Heart right ventricle (tissue), 16 donors: ENCODE measurements at regions of chr7 and their contacts with region 1.

Region 1: GRCh38 chr7:106659963-106660861 is 746 bp downstream of the CCDC71L start:
- DNase-seq: peak; percentile 61 to 78
- ATAC-seq: peak; percentile 59 to 80 (median 68)
- H3K4me3 ChIP-seq: peak overlapping the region; percentile 69 to 95 (median 82)
- H3K27ac ChIP-seq: peak overlapping the region; percentile 86 to 98 (median 94)
- H3K4me1 ChIP-seq: peaks cover 0 to 35% (median 27%) of the 10 kb centered on the region in 9 donors
- H3K27me3 ChIP-seq: no peaks in the 10 kb centered on the region
- CTCF ChIP-seq: peak; percentile 61 to 84 (median 72)

Region 2: DNA sequence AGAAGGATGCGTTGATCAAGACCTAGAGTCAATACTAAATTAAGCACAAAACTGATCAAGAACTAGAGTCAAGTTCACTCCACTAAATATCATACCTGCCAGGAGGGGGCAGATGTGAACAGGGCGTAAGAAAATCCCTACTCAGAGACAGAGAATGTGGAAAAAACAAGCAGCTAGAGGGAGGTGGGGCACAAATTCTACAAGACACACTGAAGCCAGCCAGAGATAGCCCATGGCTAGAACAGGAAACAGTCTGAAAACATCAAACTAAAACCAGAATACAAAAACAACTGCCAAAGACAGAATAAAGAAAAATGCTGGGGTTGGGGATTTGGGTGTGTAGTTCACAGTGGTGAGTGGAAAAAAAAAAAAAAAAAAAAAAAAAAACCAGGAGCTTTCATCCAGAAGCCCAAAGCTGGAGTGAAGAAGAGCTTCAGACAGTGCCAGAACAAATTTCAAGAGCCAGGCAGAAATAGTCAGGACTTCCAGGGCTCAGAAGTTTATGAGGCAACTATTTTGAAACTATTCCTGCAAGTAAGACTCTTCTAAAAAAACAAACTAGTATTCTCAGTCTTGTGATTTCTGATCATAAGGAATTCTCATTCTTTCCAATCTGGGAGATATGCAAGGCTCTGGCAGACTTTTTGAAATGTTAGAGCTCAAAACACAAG is 117.5 kb before region 1 on chr7:
- intact Hi-C with region 1: loop called in 5 of 10 experiments (anchors 5 to 10 kb)
- DNase-seq: peak in 1 of 2 donors; percentile 61
- ATAC-seq: peak in 7 of 8 donors; percentile 51 to 89 (median 86)
- H3K4me3 ChIP-seq: no peak overlapping the region
- H3K27ac ChIP-seq: peak overlapping the region in 1 of 10 donors; percentile 19
- H3K4me1 ChIP-seq: peaks cover 0 to 15% (median 6%) of the 10 kb centered on the region in 9 donors
- H3K27me3 ChIP-seq: no peaks in the 10 kb centered on the region
- CTCF ChIP-seq: peak; percentile 32 to 73 (median 61)

Region 3: GRCh38 chr7:106693677-106694353 is 33.6 kb after region 1 on chr7:
- intact Hi-C with region 1: loop called in 1 of 10 experiments (anchors 1 kb)
- DNase-seq: no peak
- ATAC-seq: no peak
- H3K4me3 ChIP-seq: no peak overlapping the region
- H3K27ac ChIP-seq: no peak overlapping the region
- H3K4me1 ChIP-seq: peaks cover 0 to 5% (median 0%) of the 10 kb centered on the region in 9 donors
- H3K27me3 ChIP-seq: no peaks in the 10 kb centered on the region
- CTCF ChIP-seq: no peak

Region 4: DNA sequence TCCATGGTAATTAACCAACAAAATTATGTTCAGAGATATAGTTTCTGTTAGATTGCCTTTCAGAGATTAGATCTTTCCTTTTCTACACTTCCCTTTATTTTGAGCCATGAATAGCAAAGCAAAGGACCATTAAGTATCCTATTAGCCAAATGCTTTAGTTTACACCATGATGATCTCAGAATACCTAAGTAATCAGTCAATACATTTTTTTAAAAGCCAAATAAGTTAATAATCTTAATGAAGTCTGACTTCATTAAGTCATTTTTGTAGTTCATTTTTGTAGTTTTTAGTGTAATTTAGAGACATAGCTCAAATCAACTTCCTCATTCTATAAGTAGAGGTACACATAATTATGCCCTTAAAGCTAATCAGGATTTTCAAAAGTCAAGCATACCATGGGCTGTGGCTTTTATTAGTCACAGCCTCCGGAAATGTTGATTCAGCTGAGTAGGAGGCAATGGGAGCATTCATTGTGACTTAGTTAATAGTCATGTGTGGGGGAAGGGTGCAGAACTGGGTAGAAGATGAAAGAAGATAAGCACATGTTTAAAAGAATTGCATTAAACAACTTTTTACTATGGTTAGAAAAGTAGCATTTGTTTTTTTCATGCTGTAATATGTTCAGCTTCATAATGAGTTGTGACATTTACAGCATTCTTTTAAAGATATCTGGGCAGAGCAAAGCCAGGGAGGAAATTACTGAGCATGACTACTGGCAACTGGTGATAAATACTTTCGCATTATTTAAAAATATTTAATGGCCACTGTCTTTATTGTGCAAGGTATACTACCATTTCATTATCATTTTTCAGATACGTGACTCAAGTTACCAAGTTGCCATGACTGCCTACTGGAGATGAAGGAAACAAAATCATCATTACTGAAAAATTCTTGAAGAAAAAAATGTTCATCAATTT is 58.0 kb after region 1 on chr7:
- intact Hi-C with region 1: loop called in 2 of 10 experiments (anchors 5 kb)
- DNase-seq: peak in 1 of 2 donors; percentile 36
- ATAC-seq: peak; percentile 68 to 91 (median 80)
- H3K4me3 ChIP-seq: no peak overlapping the region
- H3K27ac ChIP-seq: peak overlapping the region in 7 of 10 donors; percentile 1 to 83 (median 26)
- H3K4me1 ChIP-seq: peaks cover 0 to 52% (median 6%) of the 10 kb centered on the region in 9 donors
- H3K27me3 ChIP-seq: peaks cover 0 to 5% (median 0%) of the 10 kb centered on the region in 7 donors
- CTCF ChIP-seq: no peak

Region 5: DNA sequence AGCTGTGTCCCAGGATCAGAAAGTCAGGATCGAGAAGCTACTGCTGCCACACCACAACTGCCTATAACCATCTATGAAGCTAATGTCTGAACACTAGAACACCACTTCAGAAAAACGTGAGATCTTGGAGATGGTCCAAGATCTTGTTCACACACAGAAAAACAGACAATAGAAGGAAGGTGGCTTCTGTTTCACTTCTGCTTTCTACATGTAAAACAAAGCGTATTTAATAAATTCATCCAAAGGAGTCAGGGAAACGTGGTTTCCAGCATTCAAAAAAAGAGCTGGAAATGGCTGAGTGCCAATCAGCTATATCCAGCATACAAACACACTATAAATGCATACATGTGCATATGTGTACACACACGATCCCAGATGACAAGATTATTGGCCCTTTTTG is 71.0 kb after region 1 on chr7:
- intact Hi-C with region 1: loop called in 8 of 10 experiments (anchors 2 to 10 kb)
- DNase-seq: peak in 1 of 2 donors; percentile 16
- ATAC-seq: peak in 7 of 8 donors; percentile 23 to 88 (median 70)
- H3K4me3 ChIP-seq: no peak overlapping the region
- H3K27ac ChIP-seq: peak overlapping the region in 5 of 10 donors; percentile 5 to 58 (median 42)
- H3K4me1 ChIP-seq: peaks cover 6 to 33% (median 14%) of the 10 kb centered on the region in 9 donors
- H3K27me3 ChIP-seq: no peaks in the 10 kb centered on the region
- CTCF ChIP-seq: no peak

Region 6: GRCh38 chr7:106736508-106737201 is 76.4 kb after region 1 on chr7:
- intact Hi-C with region 1: loop called in 8 of 10 experiments (anchors 2 to 10 kb)
- DNase-seq: peak in 1 of 2 donors; percentile 46
- ATAC-seq: peak in 6 of 8 donors; percentile 78 to 89 (median 84)
- H3K4me3 ChIP-seq: no peak overlapping the region
- H3K27ac ChIP-seq: no peak overlapping the region
- H3K4me1 ChIP-seq: peaks cover 0 to 18% (median 6%) of the 10 kb centered on the region in 9 donors
- H3K27me3 ChIP-seq: peaks cover 0 to under 1% (median 0%) of the 10 kb centered on the region in 7 donors
- CTCF ChIP-seq: peak; percentile 20 to 81 (median 64)

Region 7: DNA sequence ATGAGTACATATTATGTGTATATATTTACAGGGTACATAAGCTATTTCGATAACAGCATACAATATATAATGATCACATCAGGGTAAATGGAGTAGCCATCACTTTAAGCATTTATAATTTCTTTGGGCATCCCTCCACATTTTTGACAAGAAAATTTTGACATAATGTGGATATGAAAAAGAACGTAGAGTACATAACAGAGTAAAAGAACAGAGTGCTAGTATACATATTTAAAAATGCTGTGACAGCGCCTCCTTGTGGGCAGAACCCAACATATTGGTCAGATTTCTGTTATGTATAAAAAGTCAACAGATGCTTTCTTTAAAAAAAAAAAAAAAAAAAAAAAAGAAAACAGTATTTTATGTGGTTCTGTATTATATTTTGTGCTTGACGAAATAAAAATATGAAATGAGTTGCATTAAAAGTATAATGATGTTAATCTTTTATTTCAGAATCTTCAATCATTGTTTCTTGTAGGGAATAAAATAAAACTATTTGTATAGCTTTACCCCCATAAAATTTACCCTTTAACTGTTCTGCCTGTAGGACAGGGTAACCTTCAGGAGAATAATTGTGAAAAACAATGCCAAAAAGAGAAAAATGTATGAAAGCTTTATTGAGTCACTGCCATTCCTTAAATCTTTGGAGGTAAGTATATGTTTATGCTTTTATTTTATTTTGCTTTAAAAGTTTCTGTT is 490.3 kb after region 1 on chr7:
- intact Hi-C with region 1: loop called in 1 of 10 experiments (anchors 10 kb)
- DNase-seq: peak; percentile 38 to 79
- ATAC-seq: peak in 7 of 8 donors; percentile 57 to 75 (median 69)
- H3K4me3 ChIP-seq: no peak overlapping the region
- H3K27ac ChIP-seq: no peak overlapping the region
- H3K4me1 ChIP-seq: peaks cover 0 to 9% (median 0%) of the 10 kb centered on the region in 9 donors
- H3K27me3 ChIP-seq: no peaks in the 10 kb centered on the region
- CTCF ChIP-seq: peak; percentile 45 to 82 (median 73)